Naive thymus-derived CD4-positive, alpha-beta T cell (primary cell): ENCODE measurements at regions of chr17 and their contacts with region 1.

Region 1: DNA sequence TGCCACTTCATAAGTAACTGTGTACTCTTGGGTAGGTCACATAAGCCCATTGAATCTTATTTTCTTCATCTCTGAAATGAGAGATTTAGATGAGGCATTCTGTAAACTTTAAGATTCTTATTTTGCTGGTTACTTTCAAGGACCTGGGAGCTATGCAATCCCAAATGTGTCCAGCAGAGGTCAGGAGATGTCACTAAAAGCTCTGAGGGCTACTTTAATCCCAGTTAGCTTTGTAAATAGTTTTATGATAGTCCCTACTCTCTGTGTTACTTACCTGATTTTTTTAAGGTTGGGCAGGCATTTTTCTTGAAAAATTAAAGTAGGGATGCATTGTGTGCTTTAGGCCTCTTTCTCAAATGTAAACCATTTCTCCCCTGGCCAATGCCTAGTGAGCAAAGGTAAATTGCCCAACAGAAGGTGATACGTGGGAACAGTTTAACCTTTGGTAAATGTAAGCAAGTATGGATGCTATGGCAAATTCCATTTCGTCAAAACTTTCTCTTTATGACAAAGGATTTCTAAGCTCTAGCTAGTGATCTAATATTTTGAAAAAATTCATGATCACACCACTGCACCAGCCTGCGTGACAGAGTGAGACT is 57.1 kb upstream of the WSB1 start:
- DNase-seq: peak; percentile 30 to 69 (median 58)
- ATAC-seq: peak; percentile 87
- H3K4me3 ChIP-seq: no peak overlapping the region
- H3K4me3 Mint-ChIP-seq: no peak overlapping the region
- H3K27ac ChIP-seq: no peak overlapping the region
- H3K27ac Mint-ChIP-seq: no peak overlapping the region
- H3K4me1 ChIP-seq: no peaks in the 10 kb centered on the region
- H3K4me1 Mint-ChIP-seq: peaks cover 0 to 19% (median 0%) of the 10 kb centered on the region in 7 donors
- H3K27me3 ChIP-seq: no peaks in the 10 kb centered on the region
- H3K27me3 Mint-ChIP-seq: peaks cover 0 to 19% (median 0%) of the 10 kb centered on the region in 5 donors

Region 2: GRCh38 chr17:27332485-27333409 is 95.9 kb after region 1 on chr17:
- CTCF ChIA-PET with region 1: interaction called, 33 read pairs
- POLR2A ChIA-PET with region 1: no interaction called
- intact Hi-C with region 1: loop called (anchors 1 kb)
- DNase-seq: peak; percentile 49 to 90 (median 71)
- ATAC-seq: peak; percentile 94
- H3K4me3 ChIP-seq: peak overlapping the region; percentile 72
- H3K4me3 Mint-ChIP-seq: peak overlapping the region; percentile 75 to 90 (median 86)
- H3K27ac ChIP-seq: peak overlapping the region; percentile 23
- H3K27ac Mint-ChIP-seq: peak overlapping the region in 8 of 9 donors; percentile 43 to 92 (median 80)
- H3K4me1 ChIP-seq: peaks cover 6 to 10% of the 10 kb centered on the region in 2 donors
- H3K4me1 Mint-ChIP-seq: peaks cover 6 to 25% (median 18%) of the 10 kb centered on the region in 7 donors
- H3K27me3 ChIP-seq: no peaks in the 10 kb centered on the region
- H3K27me3 Mint-ChIP-seq: peaks cover 0 to 3% (median 0%) of the 10 kb centered on the region in 5 donors

Region 3: DNA sequence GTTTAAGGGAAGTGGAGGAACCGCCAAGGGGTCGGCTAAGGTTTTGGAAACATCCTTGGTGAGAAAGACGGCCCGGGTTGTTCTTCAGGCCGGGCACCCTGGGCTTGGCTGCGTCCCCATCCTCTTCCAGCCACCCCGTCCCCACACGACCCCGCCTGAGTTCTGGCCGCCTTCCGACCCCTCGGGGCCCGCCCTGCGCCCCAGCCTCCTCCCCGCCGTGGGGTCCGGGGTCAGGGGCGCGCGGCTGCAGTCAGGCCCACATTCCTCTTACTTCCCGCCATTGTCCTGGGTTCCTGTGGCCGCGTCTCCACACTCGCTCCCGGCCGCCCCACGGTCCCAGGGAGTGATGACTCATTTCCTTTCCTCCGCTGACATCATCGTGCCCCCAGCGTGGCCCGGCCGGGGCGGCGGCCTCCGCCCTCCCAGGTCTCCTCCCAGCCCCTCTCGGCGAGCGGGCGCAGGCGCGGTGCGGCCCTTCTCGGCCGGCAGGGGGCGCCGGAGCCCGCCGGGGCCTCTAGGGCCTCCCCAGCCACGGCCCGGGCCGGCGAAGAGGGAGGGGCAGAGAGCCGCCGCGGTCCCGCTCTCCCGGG is 116.7 kb after region 1 on chr17:
- CTCF ChIA-PET with region 1: interaction called, 10 read pairs
- POLR2A ChIA-PET with region 1: no interaction called
- intact Hi-C with region 1: loop called (anchors 1 kb)
- DNase-seq: peak; percentile 68 to 95 (median 77)
- ATAC-seq: peak; percentile 96
- H3K4me3 ChIP-seq: peak overlapping the region; percentile 85
- H3K4me3 Mint-ChIP-seq: peak overlapping the region; percentile 30 to 93 (median 78)
- H3K27ac ChIP-seq: peak overlapping the region; percentile 83
- H3K27ac Mint-ChIP-seq: peak overlapping the region; percentile 46 to 94 (median 79)
- H3K4me1 ChIP-seq: peaks cover 3 to 12% of the 10 kb centered on the region in 2 donors
- H3K4me1 Mint-ChIP-seq: peaks cover 12 to 31% (median 21%) of the 10 kb centered on the region in 7 donors
- H3K27me3 ChIP-seq: no peaks in the 10 kb centered on the region
- H3K27me3 Mint-ChIP-seq: no peaks in the 10 kb centered on the region

Region 4: GRCh38 chr17:27381007-27381501 is 144.2 kb after region 1 on chr17:
- CTCF ChIA-PET with region 1: no interaction called
- POLR2A ChIA-PET with region 1: no interaction called
- intact Hi-C with region 1: loop called in 1 of 2 experiments (anchors 1 kb)
- DNase-seq: peak; percentile 31 to 87 (median 53)
- ATAC-seq: peak; percentile 94
- H3K4me3 ChIP-seq: no peak overlapping the region
- H3K4me3 Mint-ChIP-seq: no peak overlapping the region
- H3K27ac ChIP-seq: no peak overlapping the region
- H3K27ac Mint-ChIP-seq: no peak overlapping the region
- H3K4me1 ChIP-seq: no peaks in the 10 kb centered on the region
- H3K4me1 Mint-ChIP-seq: peaks cover 0 to 7% (median 0%) of the 10 kb centered on the region in 7 donors
- H3K27me3 ChIP-seq: peaks cover 0 to 4% of the 10 kb centered on the region in 2 donors
- H3K27me3 Mint-ChIP-seq: peaks cover 12 to 28% (median 24%) of the 10 kb centered on the region in 5 donors

Region 5: DNA sequence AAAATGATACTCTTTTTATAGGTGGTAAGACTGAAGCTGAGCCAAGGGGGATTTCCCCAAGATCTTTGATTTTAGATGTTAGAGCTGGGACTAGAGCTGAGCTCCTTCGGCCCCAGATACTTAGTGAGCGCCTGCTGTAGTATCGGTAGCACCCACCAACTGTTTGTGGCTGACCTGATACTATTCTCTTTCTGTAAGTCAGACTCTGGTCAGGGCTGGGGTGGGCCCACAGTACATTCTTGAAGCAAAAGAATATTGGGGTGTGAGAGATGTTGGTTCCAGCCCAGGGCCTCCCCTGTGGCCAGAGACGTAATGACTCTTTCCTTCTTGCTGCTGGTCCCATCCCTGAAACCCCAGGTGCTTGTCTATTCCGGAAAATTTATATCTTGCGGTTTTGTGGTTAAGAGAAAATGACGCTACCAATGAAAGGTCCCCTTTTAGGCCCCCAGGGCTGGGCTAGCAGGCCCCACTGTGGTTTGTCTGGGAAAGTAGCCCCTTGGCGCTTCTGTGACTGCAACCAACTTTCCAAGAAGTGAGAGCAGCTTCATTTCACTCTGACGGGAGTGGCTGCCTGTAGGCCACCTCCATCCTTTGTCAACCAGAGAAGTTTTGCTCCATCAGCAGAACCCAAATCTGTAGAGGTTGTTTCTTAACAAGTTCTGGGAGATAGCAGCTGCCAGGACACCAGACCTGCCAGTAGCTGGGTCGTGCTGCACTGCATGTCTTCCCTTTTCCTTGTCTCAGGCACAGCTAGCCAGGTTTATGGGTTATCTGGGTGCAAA is 307.7 kb after region 1 on chr17:
- CTCF ChIA-PET with region 1: no interaction called
- POLR2A ChIA-PET with region 1: no interaction called
- intact Hi-C with region 1: no loop called
- DNase-seq: peak in 1 of 9 donors; percentile 78
- ATAC-seq: peak; percentile 71
- H3K4me3 ChIP-seq: no peak overlapping the region
- H3K4me3 Mint-ChIP-seq: peak overlapping the region in 6 of 10 donors; percentile 9 to 80 (median 30)
- H3K27ac ChIP-seq: no peak overlapping the region
- H3K27ac Mint-ChIP-seq: peak overlapping the region in 5 of 9 donors; percentile 16 to 92 (median 19)
- H3K4me1 ChIP-seq: peaks cover 15 to 19% of the 10 kb centered on the region in 2 donors
- H3K4me1 Mint-ChIP-seq: peaks cover 18 to 79% (median 35%) of the 10 kb centered on the region in 7 donors
- H3K27me3 ChIP-seq: no peaks in the 10 kb centered on the region
- H3K27me3 Mint-ChIP-seq: peaks cover 0 to 3% (median 0%) of the 10 kb centered on the region in 5 donors

Region 6: GRCh38 chr17:27760069-27760885 is 523.5 kb after region 1 on chr17:
- CTCF ChIA-PET with region 1: no interaction called
- POLR2A ChIA-PET with region 1: no interaction called
- intact Hi-C with region 1: loop called in 1 of 2 experiments (anchors 10 kb)
- DNase-seq: peak; percentile 28 to 77 (median 59)
- ATAC-seq: peak; percentile 73
- H3K4me3 ChIP-seq: no peak overlapping the region
- H3K4me3 Mint-ChIP-seq: no peak overlapping the region
- H3K27ac ChIP-seq: no peak overlapping the region
- H3K27ac Mint-ChIP-seq: no peak overlapping the region
- H3K4me1 ChIP-seq: no peaks in the 10 kb centered on the region
- H3K4me1 Mint-ChIP-seq: peaks cover 0 to 7% (median 0%) of the 10 kb centered on the region in 7 donors
- H3K27me3 ChIP-seq: no peaks in the 10 kb centered on the region
- H3K27me3 Mint-ChIP-seq: no peaks in the 10 kb centered on the region